Mucosa of descending colon (tissue), 3 donors: ENCODE measurements at regions of chr1 and their contacts with region 1.

Region 1: DNA sequence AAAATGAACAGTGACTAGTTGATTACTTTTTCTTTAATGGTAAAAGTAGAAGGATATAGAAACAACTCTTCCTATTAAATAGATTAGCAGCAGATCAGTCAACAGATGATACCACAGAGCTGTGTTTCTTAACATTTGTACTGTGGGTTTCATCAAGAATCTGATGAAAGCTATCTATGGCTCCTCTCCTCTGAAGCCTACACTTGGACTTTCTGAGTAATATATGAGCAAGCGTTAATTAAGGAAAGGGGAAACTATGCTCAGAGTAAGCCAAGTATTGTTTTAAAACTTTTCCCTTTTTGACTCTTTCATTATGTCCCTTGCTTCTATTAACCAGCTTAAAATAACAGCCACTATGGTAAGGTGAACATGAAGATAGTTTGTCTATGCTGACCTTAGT is 10.8 kb downstream of the ARID4B start:
- DNase-seq: no peak
- ATAC-seq: no peak
- H3K4me3 ChIP-seq: no peak overlapping the region
- H3K4me1 ChIP-seq: peaks cover 20% of the 10 kb centered on the region
- CTCF ChIP-seq: no peak

Region 2: GRCh38 chr1:235253219-235253962 is 63.8 kb before region 1 on chr1:
- intact Hi-C with region 1: loop called in 1 of 2 experiments (anchors 10 kb)
- DNase-seq: peak in 2 of 3 donors; percentile 47 to 73
- ATAC-seq: peak; percentile 92
- H3K4me3 ChIP-seq: no peak overlapping the region
- H3K4me1 ChIP-seq: peaks cover 5% of the 10 kb centered on the region
- CTCF ChIP-seq: peak; percentile 68

Region 3: DNA sequence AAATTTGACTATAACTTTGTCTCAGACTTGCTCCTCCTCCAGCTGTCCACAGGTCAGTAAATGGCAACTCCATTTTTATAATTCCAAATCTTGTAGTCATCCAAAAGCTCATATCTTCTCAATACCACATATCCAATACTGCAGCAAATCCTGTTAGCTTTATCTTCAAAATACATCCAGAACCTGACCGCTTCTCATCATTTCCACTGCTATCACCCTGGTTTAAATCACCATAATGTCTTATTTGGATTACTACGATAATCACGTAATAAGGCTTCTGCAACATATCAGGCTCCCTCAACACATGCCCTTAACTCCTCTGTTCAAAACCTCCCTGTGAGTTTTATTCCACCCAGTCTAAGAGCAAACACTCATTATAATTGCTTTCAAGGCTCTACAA is 930.1 kb after region 1 on chr1:
- intact Hi-C with region 1: no loop called
- DNase-seq: no peak
- ATAC-seq: no peak
- H3K4me3 ChIP-seq: no peak overlapping the region
- H3K4me1 ChIP-seq: no peaks in the 10 kb centered on the region
- CTCF ChIP-seq: no peak